Ascending aorta (tissue), 2 donors: ENCODE measurements at regions of chr5 and their contacts with region 1.

Region 1: GRCh38 chr5:119322948-119323537 is 32.8 kb upstream of the TNFAIP8 start:
- DNase-seq: no peak
- H3K4me3 ChIP-seq: no peak overlapping the region
- H3K27ac ChIP-seq: peak overlapping the region; percentile 80 to 82
- H3K4me1 ChIP-seq: peaks cover 4 to 13% of the 10 kb centered on the region in 2 donors
- H3K27me3 ChIP-seq: no peaks in the 10 kb centered on the region
- CTCF ChIP-seq: no peak

Region 2: DNA sequence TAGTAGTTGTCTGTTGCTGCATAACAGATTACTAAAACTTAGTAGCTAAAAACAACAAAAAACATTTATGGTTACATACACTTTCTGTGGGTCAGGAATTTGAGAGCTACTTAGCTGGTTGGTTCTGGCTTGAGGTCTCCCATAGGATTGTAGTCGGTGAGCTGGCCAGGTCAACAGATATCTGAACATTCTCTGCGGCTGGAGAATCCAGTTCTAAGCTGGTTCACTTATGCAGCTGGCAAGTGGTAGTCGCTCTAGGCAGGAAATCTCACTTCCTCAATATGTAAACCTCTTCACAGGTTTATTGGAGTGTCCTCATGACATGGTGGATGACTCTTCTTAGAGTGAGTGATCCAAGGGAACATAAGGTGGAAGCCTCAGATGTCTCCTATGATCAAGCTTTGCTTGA is 32.9 kb before region 1 on chr5:
- intact Hi-C with region 1: loop called (anchors 5 kb)
- DNase-seq: no peak
- H3K4me3 ChIP-seq: no peak overlapping the region
- H3K27ac ChIP-seq: peak overlapping the region; percentile 75 to 83
- H3K4me1 ChIP-seq: peaks cover 12 to 52% of the 10 kb centered on the region in 2 donors
- H3K27me3 ChIP-seq: no peaks in the 10 kb centered on the region
- CTCF ChIP-seq: no peak